Ascending aorta (tissue), 2 donors: ENCODE measurements at regions of chr10 and their contacts with region 1.

Region 1: DNA sequence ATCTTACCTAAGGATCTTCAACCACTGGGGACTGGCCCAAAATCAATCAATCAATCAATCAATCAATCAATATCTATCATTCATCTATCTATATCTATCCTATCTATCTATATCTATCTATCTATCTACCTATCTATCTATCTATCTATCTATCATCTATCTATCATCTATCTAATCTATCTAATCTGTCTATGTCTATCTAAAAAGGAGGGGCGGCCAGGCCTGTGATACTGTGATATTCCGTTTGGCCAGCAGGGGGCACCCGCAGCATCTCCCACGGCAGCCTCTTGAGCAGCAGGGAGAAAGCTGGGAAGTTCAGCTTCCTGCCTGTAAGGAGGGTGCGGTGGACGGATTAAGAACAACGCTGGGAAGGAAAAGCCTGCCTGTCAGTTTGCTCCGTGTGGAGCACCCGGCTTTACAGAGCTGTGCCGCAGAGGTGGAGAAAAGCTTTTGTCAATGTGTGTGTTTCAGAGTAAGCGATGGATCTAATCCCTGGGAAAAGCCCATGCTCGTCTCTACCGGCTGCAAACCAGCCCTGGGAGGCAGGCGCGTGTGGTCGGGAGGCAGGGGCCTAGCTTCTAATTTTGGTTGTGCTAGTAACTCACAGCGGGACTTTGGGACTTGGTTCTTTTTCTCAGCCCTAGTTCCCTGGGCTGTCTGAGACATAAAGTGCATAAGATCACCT is 125.0 kb downstream of the SH2D4B start:
- DNase-seq: peak; percentile 15 to 91
- H3K4me3 ChIP-seq: peak overlapping the region; percentile 34 to 57
- H3K27ac ChIP-seq: peak overlapping the region; percentile 66 to 77
- H3K4me1 ChIP-seq: no peaks in the 10 kb centered on the region
- H3K27me3 ChIP-seq: no peaks in the 10 kb centered on the region
- CTCF ChIP-seq: peak; percentile 77 to 88 (median 86)

Region 2: GRCh38 chr10:80389809-80390208 is 272.9 kb before region 1 on chr10:
- intact Hi-C with region 1: loop called (anchors 5 kb)
- DNase-seq: no peak
- H3K4me3 ChIP-seq: no peak overlapping the region
- H3K27ac ChIP-seq: no peak overlapping the region
- H3K4me1 ChIP-seq: peaks cover 13 to 31% of the 10 kb centered on the region in 2 donors
- H3K27me3 ChIP-seq: no peaks in the 10 kb centered on the region
- CTCF ChIP-seq: no peak

Region 3: GRCh38 chr10:80684259-80684658 is 21.5 kb after region 1 on chr10:
- intact Hi-C with region 1: no loop called
- DNase-seq: no peak
- H3K4me3 ChIP-seq: no peak overlapping the region
- H3K27ac ChIP-seq: no peak overlapping the region
- H3K4me1 ChIP-seq: no peaks in the 10 kb centered on the region
- H3K27me3 ChIP-seq: no peaks in the 10 kb centered on the region
- CTCF ChIP-seq: no peak

Region 4: GRCh38 chr10:80924063-80924952 is 261.6 kb after region 1 on chr10:
- intact Hi-C with region 1: loop called (anchors 2 kb)
- DNase-seq: no peak
- H3K4me3 ChIP-seq: no peak overlapping the region
- H3K27ac ChIP-seq: no peak overlapping the region
- H3K4me1 ChIP-seq: no peaks in the 10 kb centered on the region
- H3K27me3 ChIP-seq: no peaks in the 10 kb centered on the region
- CTCF ChIP-seq: peak; percentile 12 to 60 (median 21)